ENCODE measurements at regions of chr19 and their contacts with region 1.

Region 1: GRCh38 chr19:17075035-17075863 is at the starts of genes HAUS8 and MYO9B:
- DNase-seq: peak; percentile 100
- ATAC-seq: peak; percentile 87
- H3K4me3 ChIP-seq: peak within 1 kb of the TSS; percentile 77 to 93 (median 86)
- H3K4me3 Mint-ChIP-seq: peak within 1 kb of the TSS; percentile 98
- H3K27ac ChIP-seq: peak within 1 kb of the TSS; percentile 79 to 89
- H3K27ac Mint-ChIP-seq: peak within 1 kb of the TSS; percentile 99
- H3K4me1 ChIP-seq: peaks cover 44 to 65% of the 10 kb centered on the region in 2 donors
- H3K4me1 Mint-ChIP-seq: peaks cover 66% of the 10 kb centered on the region
- H3K27me3 ChIP-seq: no peaks in the 10 kb centered on the region
- H3K27me3 Mint-ChIP-seq: no peaks in the 10 kb centered on the region
- CTCF ChIP-seq: no peak
- total RNA-seq, gene HAUS8: 22.4 and 24.9 TPM in 2 replicates
- total RNA-seq, gene MYO9B: 273 and 288 TPM in 2 replicates

Region 2: GRCh38 chr19:17090583-17090982 is 15.3 kb after region 1 on chr19:
- CTCF ChIA-PET with region 1: interaction called, 6 read pairs
- POLR2A ChIA-PET with region 1: interaction called, 3 read pairs
- intact Hi-C with region 1: loop called (anchors 1 kb)
- DNase-seq: peak; percentile 84
- ATAC-seq: peak; percentile 73
- H3K4me3 ChIP-seq: peak overlapping the region in 1 of 5 experiments; percentile 1
- H3K4me3 Mint-ChIP-seq: peak overlapping the region; percentile 48
- H3K27ac ChIP-seq: peak overlapping the region; percentile 82 to 88
- H3K27ac Mint-ChIP-seq: peak overlapping the region; percentile 47
- H3K4me1 ChIP-seq: peaks cover 36 to 46% of the 10 kb centered on the region in 2 donors
- H3K4me1 Mint-ChIP-seq: peaks cover 57% of the 10 kb centered on the region
- H3K27me3 ChIP-seq: no peaks in the 10 kb centered on the region
- H3K27me3 Mint-ChIP-seq: no peaks in the 10 kb centered on the region
- CTCF ChIP-seq: no peak

Region 3: GRCh38 chr19:17125715-17126677 is 50.7 kb after region 1 on chr19:
- CTCF ChIA-PET with region 1: interaction called, 3 read pairs
- POLR2A ChIA-PET with region 1: interaction called, 3 read pairs
- intact Hi-C with region 1: loop called (anchors 2 kb)
- DNase-seq: peak; percentile 86
- ATAC-seq: peak; percentile 87
- H3K4me3 ChIP-seq: peak overlapping the region; percentile 8 to 52 (median 37)
- H3K4me3 Mint-ChIP-seq: peak overlapping the region; percentile 91
- H3K27ac ChIP-seq: peak overlapping the region; percentile 84 to 86
- H3K27ac Mint-ChIP-seq: peak overlapping the region; percentile 99
- H3K4me1 ChIP-seq: peaks cover 27 to 72% of the 10 kb centered on the region in 2 donors
- H3K4me1 Mint-ChIP-seq: peaks cover 55% of the 10 kb centered on the region
- H3K27me3 ChIP-seq: no peaks in the 10 kb centered on the region
- H3K27me3 Mint-ChIP-seq: no peaks in the 10 kb centered on the region
- CTCF ChIP-seq: no peak

Region 4: GRCh38 chr19:17183858-17184321 is 108.6 kb after region 1 on chr19:
- CTCF ChIA-PET with region 1: interaction called, 24 read pairs
- POLR2A ChIA-PET with region 1: interaction called, 8 read pairs
- intact Hi-C with region 1: loop called (anchors 2 kb)
- DNase-seq: peak; percentile 79
- ATAC-seq: peak; percentile 83
- H3K4me3 ChIP-seq: peak overlapping the region in 4 of 5 experiments; percentile 17 to 53 (median 33)
- H3K4me3 Mint-ChIP-seq: peak overlapping the region; percentile 85
- H3K27ac ChIP-seq: peak overlapping the region; percentile 66 to 76
- H3K27ac Mint-ChIP-seq: peak overlapping the region; percentile 88
- H3K4me1 ChIP-seq: peaks cover 19 to 25% of the 10 kb centered on the region in 2 donors
- H3K4me1 Mint-ChIP-seq: peaks cover 30% of the 10 kb centered on the region
- H3K27me3 ChIP-seq: no peaks in the 10 kb centered on the region
- H3K27me3 Mint-ChIP-seq: no peaks in the 10 kb centered on the region
- CTCF ChIP-seq: no peak

Region 5: GRCh38 chr19:18571564-18572300 is 1496.5 kb after region 1 on chr19 and contains the start of gene UBA52:
- CTCF ChIA-PET with region 1: no interaction called
- POLR2A ChIA-PET with region 1: no interaction called
- intact Hi-C with region 1: loop called (anchors 5 kb)
- DNase-seq: peak; percentile 99
- ATAC-seq: peak; percentile 93
- H3K4me3 ChIP-seq: peak within 1 kb of the TSS; percentile 69 to 94 (median 86)
- H3K4me3 Mint-ChIP-seq: peak within 1 kb of the TSS; percentile 94
- H3K27ac ChIP-seq: peak within 1 kb of the TSS; percentile 85 to 95
- H3K27ac Mint-ChIP-seq: peak within 1 kb of the TSS; percentile 90
- H3K4me1 ChIP-seq: peaks cover 12 to 25% of the 10 kb centered on the region in 2 donors
- H3K4me1 Mint-ChIP-seq: peaks cover 16% of the 10 kb centered on the region
- H3K27me3 ChIP-seq: no peaks in the 10 kb centered on the region
- H3K27me3 Mint-ChIP-seq: no peaks in the 10 kb centered on the region
- CTCF ChIP-seq: no peak
- total RNA-seq, gene UBA52: 1,690 and 1,837 TPM in 2 replicates

Measured in B cell (primary cell).